Activated B cell treated with CpG ODN at 0.5 μM for 24 hours (primary cell): ENCODE measurements at regions of chr1 and their contacts with region 1.

Region 1: GRCh38 chr1:32005522-32005921 is 8.1 kb upstream of the KHDRBS1 start:
- DNase-seq: no peak
- ATAC-seq: peak; percentile 79
- H3K4me3 Mint-ChIP-seq: no peak overlapping the region
- H3K27ac Mint-ChIP-seq: peak overlapping the region; percentile 57
- H3K4me1 Mint-ChIP-seq: peaks cover 31% of the 10 kb centered on the region
- H3K27me3 Mint-ChIP-seq: no peaks in the 10 kb centered on the region
- CTCF ChIP-seq: no peak

Region 2: GRCh38 chr1:31984419-31985347 is 20.8 kb before region 1 on chr1:
- CTCF ChIA-PET with region 1: interaction called, 11 read pairs
- POLR2A ChIA-PET with region 1: no interaction called
- intact Hi-C with region 1: loop called (anchors 2 kb)
- DNase-seq: no peak
- ATAC-seq: peak; percentile 9
- H3K4me3 Mint-ChIP-seq: peak overlapping the region; percentile 35
- H3K27ac Mint-ChIP-seq: peak overlapping the region; percentile 82
- H3K4me1 Mint-ChIP-seq: peaks cover 50% of the 10 kb centered on the region
- H3K27me3 Mint-ChIP-seq: no peaks in the 10 kb centered on the region
- CTCF ChIP-seq: no peak